B cell (primary cell): ENCODE measurements at regions of chr21 and their contacts with region 1.

Region 1: DNA sequence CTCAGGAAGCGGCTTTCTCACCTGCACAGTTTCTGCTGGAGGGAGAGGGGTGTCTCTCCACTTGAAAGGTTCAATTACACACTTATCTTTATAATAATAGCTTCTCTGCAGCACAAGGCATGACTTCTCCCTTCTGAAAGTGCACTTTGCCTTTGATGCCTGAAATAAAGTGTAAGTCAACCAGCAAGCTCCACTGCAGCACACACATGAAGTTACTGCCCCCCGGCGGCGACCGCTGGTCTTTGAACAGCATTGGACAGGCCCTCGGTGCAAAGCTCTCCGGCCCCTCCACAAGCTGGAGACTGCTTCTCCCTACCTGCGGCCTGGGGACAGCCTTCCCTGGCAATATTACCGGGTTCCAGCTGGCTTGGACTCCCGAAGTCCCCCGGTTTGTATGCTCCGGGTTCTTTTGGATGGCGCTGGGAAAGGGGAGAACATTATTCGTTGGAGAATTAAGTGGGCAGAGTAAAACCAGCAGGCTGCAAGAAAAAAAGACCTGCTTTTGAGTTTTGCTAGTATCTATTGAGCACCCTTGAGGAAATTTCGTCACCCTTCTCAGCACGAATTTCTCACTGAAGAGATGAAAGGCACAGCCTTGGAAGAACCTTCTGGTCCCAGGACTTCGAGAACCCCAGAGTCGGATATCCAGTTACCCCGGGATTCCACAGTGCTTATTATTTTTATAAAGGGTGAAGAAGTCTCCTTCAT is 11.8 kb downstream of the RCAN1 start:
- DNase-seq: peak; percentile 58
- ATAC-seq: peak; percentile 64
- H3K4me3 ChIP-seq: no peak overlapping the region
- H3K4me3 Mint-ChIP-seq: no peak overlapping the region
- H3K27ac ChIP-seq: no peak overlapping the region
- H3K27ac Mint-ChIP-seq: no peak overlapping the region
- H3K4me1 ChIP-seq: no peaks in the 10 kb centered on the region
- H3K4me1 Mint-ChIP-seq: peaks cover 2% of the 10 kb centered on the region
- H3K27me3 ChIP-seq: no peaks in the 10 kb centered on the region
- H3K27me3 Mint-ChIP-seq: no peaks in the 10 kb centered on the region
- CTCF ChIP-seq: peak; percentile 71

Region 2: GRCh38 chr21:34362136-34362444 is 241.1 kb before region 1 on chr21:
- CTCF ChIA-PET with region 1: interaction called, 18 read pairs
- POLR2A ChIA-PET with region 1: no interaction called
- intact Hi-C with region 1: no loop called
- DNase-seq: no peak
- ATAC-seq: no peak
- H3K4me3 ChIP-seq: no peak overlapping the region
- H3K4me3 Mint-ChIP-seq: no peak overlapping the region
- H3K27ac ChIP-seq: no peak overlapping the region
- H3K27ac Mint-ChIP-seq: no peak overlapping the region
- H3K4me1 ChIP-seq: peaks cover 4% of the 10 kb centered on the region in 2 donors
- H3K4me1 Mint-ChIP-seq: peaks cover 6% of the 10 kb centered on the region
- H3K27me3 ChIP-seq: peaks cover 0 to 2% (median 0%) of the 10 kb centered on the region in 4 experiments
- H3K27me3 Mint-ChIP-seq: peaks cover 30% of the 10 kb centered on the region
- CTCF ChIP-seq: peak; percentile 43

Region 3: GRCh38 chr21:34367321-34367935 is 235.7 kb before region 1 on chr21:
- CTCF ChIA-PET with region 1: interaction called, 18 read pairs
- POLR2A ChIA-PET with region 1: no interaction called
- intact Hi-C with region 1: no loop called
- DNase-seq: peak; percentile 58
- ATAC-seq: peak; percentile 70
- H3K4me3 ChIP-seq: no peak overlapping the region
- H3K4me3 Mint-ChIP-seq: no peak overlapping the region
- H3K27ac ChIP-seq: no peak overlapping the region
- H3K27ac Mint-ChIP-seq: no peak overlapping the region
- H3K4me1 ChIP-seq: no peaks in the 10 kb centered on the region
- H3K4me1 Mint-ChIP-seq: no peaks in the 10 kb centered on the region
- H3K27me3 ChIP-seq: peaks cover 0 to 3% (median 0%) of the 10 kb centered on the region in 4 experiments
- H3K27me3 Mint-ChIP-seq: peaks cover 20% of the 10 kb centered on the region
- CTCF ChIP-seq: peak; percentile 78

Region 4: DNA sequence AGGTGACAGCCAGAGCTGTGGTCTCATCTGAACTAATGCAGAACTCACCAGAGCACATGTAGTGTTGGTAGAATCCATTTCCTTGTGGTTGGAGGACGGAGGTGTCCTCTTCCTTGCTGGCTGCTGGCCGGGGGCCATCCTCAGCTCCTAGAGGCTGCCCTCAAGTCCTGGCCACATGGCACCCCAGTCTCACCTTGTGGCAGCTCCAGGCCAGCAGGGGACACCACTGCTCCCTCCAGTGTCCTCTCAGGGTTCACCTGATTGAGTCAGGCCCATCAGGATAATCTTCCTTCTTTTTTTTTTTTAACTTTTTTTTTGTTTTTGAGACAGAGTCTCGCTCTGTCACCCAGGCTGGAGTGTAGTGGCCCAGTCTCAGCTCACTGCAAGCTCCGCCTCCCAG is 94.0 kb before region 1 on chr21:
- CTCF ChIA-PET with region 1: interaction called, 18 read pairs
- POLR2A ChIA-PET with region 1: interaction called, 3 read pairs
- intact Hi-C with region 1: no loop called
- DNase-seq: no peak
- ATAC-seq: no peak
- H3K4me3 ChIP-seq: no peak overlapping the region
- H3K4me3 Mint-ChIP-seq: no peak overlapping the region
- H3K27ac ChIP-seq: no peak overlapping the region
- H3K27ac Mint-ChIP-seq: no peak overlapping the region
- H3K4me1 ChIP-seq: no peaks in the 10 kb centered on the region
- H3K4me1 Mint-ChIP-seq: no peaks in the 10 kb centered on the region
- H3K27me3 ChIP-seq: peaks cover 0 to 2% (median 0%) of the 10 kb centered on the region in 4 experiments
- H3K27me3 Mint-ChIP-seq: peaks cover 8% of the 10 kb centered on the region
- CTCF ChIP-seq: no peak

Region 5: DNA sequence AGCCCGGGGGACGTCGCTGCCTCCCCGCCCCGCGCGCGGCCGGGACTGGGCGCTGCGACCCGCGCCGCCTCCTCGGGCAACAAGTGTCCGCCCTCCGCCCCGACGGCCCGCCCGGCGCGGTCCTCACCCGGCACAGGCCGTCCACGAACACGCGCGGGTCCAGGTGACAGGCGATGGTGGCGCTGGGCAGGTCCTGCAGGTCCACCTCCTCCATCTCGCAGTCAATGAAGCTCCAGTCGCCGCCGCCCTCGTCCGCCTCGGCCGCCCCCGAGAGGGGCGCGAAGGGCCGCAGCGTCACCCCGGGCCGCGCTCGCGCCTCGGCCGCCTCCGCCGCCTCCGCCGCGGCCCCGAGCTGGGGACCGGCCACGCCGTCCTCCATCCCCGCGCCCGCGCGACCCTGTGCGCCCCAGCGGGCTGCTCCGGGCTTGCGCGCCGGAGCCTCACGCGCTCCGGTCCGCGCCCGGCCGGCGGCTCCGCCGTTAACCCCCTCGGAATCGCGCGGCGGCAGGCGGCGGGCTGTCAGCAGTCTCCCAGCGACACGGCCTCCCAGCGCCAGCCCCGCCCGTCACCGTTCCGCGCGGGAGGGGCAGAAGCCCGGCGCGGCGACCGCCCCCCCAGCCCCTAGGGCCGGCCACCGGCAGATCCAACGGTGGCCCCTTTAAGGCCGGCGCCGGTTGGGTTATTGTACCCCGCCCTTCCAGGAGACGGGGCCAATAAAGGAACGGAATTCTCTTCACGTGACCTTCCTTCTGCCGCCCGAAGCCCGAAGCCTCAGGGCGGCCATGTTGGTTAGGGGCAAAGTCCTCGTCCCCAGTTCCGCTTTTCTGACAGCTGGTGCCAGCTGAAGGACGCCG is 11.7 kb after region 1 on chr21 and contains the start of gene RCAN1:
- CTCF ChIA-PET with region 1: interaction called, 12 read pairs
- POLR2A ChIA-PET with region 1: no interaction called
- intact Hi-C with region 1: no loop called
- DNase-seq: peak; percentile 94
- ATAC-seq: peak; percentile 95
- H3K4me3 ChIP-seq: peak within 1 kb of the TSS; percentile 41 to 74 (median 59)
- H3K4me3 Mint-ChIP-seq: peak within 1 kb of the TSS; percentile 91
- H3K27ac ChIP-seq: peak within 1 kb of the TSS in 1 of 2 donors; percentile 71
- H3K27ac Mint-ChIP-seq: peak within 1 kb of the TSS; percentile 84
- H3K4me1 ChIP-seq: peaks cover 9 to 11% of the 10 kb centered on the region in 2 donors
- H3K4me1 Mint-ChIP-seq: peaks cover 16% of the 10 kb centered on the region
- H3K27me3 ChIP-seq: peaks cover 0 to 7% (median 0%) of the 10 kb centered on the region in 4 experiments
- H3K27me3 Mint-ChIP-seq: peaks cover 15% of the 10 kb centered on the region
- CTCF ChIP-seq: no peak
- total RNA-seq, gene RCAN1: 4.2 and 4.4 TPM in 2 replicates

Region 6: DNA sequence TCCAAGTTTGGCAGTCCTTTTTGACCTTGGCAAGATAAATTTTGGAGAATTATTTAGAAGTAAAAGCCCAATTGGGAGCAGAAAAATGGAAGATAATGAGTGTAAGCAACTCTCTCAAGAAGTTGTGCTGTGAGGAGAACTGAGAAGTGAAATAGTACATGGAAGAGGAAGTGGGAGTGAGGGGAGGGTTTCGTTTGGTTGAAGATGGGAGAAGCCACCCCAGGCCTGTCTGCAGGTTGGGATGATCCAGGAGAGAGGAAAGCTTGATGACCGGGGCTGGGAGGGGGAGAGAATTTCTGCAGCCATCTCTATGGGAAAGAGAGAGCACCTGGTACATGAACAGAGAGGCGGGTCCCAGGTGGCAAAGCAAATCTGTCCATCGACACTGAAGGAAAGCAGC is 20.4 kb after region 1 on chr21:
- CTCF ChIA-PET with region 1: interaction called, 14 read pairs
- POLR2A ChIA-PET with region 1: no interaction called
- intact Hi-C with region 1: no loop called
- DNase-seq: no peak
- ATAC-seq: no peak
- H3K4me3 ChIP-seq: no peak overlapping the region
- H3K4me3 Mint-ChIP-seq: no peak overlapping the region
- H3K27ac ChIP-seq: no peak overlapping the region
- H3K27ac Mint-ChIP-seq: no peak overlapping the region
- H3K4me1 ChIP-seq: peaks cover 3 to 4% of the 10 kb centered on the region in 2 donors
- H3K4me1 Mint-ChIP-seq: peaks cover 6% of the 10 kb centered on the region
- H3K27me3 ChIP-seq: peaks cover 0 to 5% (median 0%) of the 10 kb centered on the region in 4 experiments
- H3K27me3 Mint-ChIP-seq: peaks cover 29% of the 10 kb centered on the region
- CTCF ChIP-seq: no peak

Region 7: DNA sequence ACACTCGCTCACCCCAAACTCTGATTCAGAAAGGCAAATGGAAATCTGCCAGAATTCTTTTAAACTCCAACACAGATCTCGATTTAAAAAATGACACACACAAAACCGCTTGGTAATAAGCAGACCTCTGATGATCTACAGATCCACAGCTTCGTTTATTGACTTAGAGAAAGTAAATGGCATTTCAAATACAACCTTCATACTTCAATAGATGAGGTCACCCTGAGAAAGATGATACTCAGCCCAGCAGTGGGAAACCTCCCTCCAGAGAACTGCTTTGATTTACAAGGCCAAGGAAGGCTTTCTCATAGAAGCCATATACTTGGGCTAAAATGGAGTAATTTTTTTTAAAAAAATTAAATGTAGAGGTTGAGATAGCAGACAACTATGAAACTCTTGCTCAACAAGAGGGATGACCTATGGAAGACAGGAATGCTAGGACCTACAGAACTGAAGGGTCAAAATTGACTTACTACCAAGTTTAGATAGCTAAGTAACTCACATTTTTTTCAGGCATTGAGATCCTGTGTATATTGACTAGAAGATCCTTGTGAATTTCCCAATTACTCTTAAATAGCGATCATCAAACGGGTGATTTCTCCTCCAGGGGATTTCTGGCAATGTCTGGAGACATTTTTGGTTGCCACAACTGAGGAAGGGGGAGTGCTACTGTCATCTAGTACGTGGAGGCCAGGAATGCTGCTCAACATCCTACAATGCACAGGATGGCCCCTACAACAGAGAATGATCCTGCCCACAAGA is 209.5 kb after region 1 on chr21:
- CTCF ChIA-PET with region 1: no interaction called
- POLR2A ChIA-PET with region 1: no interaction called
- intact Hi-C with region 1: no loop called
- DNase-seq: no peak
- ATAC-seq: no peak
- H3K4me3 ChIP-seq: no peak overlapping the region
- H3K4me3 Mint-ChIP-seq: no peak overlapping the region
- H3K27ac ChIP-seq: no peak overlapping the region
- H3K27ac Mint-ChIP-seq: no peak overlapping the region
- H3K4me1 ChIP-seq: no peaks in the 10 kb centered on the region
- H3K4me1 Mint-ChIP-seq: peaks cover 13% of the 10 kb centered on the region
- H3K27me3 ChIP-seq: no peaks in the 10 kb centered on the region
- H3K27me3 Mint-ChIP-seq: no peaks in the 10 kb centered on the region
- CTCF ChIP-seq: no peak